ENCODE measurements at regions of chr1 and their contacts with region 1.

Region 1: DNA sequence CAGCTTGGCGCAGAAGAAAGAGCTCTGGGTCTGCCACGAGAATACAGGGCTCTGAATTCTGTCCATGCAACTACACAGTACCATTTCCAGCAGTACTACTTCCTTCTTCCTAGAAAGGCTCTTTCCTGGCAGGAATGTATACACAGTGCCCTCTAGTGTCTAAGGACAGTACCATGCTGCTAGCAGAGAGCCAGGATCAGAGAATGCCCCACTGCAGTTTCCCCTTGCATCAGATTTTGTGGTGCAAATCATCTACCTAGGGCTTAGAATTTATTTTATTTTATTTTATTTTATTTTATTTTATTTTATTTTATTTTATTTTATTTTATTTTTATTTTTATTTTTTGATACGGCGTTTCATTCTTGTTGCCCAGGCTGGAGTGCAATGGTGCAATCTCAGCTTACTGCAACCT is 50.8 kb downstream of the PAX7 start:
- DNase-seq: no peak
- H3K4me3 ChIP-seq: no peak overlapping the region
- H3K27ac ChIP-seq: no peak overlapping the region
- H3K4me1 ChIP-seq: peaks cover 3 to 8% (median 8%) of the 10 kb centered on the region in 4 experiments; a peak in 6 of 7 replicates
- H3K27me3 ChIP-seq: peaks cover 0 to 28% (median 14%) of the 10 kb centered on the region in 4 experiments; a peak in 6 of 7 replicates
- CTCF ChIP-seq: peak; percentile 31 to 89 (median 72)
- EP300 ChIP-seq: no peak
- POLR2A ChIP-seq: no peak
- RAD21 ChIP-seq: peak; percentile 83 to 91

Region 2: DNA sequence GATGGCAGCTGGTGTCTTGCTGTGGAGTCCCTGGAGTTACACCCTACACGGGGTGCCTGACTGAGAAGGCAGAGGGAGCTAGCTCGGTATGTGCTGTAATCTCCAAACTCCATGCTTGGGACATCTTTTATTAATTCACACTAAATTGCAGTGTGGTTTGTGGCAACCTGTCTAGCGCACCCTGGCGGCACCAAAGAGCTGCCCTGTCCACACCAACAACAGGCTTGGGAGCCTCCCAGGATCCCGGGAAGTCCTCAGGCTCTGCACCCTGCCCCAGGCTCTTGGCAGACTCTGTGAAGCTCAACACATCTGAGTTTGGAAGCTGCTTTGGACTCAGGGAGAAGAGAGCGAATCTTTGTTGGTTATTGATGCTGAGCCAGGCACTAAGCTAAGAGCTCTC is 434.9 kb before region 1 on chr1:
- CTCF ChIA-PET with region 1: no interaction called
- POLR2A ChIA-PET with region 1: no interaction called
- DNase-seq: no peak
- H3K4me3 ChIP-seq: no peak overlapping the region
- H3K27ac ChIP-seq: no peak overlapping the region
- H3K4me1 ChIP-seq: peaks cover 0 to 7% (median 0%) of the 10 kb centered on the region in 4 experiments; a peak in 1 of 7 replicates
- H3K27me3 ChIP-seq: no peaks in the 10 kb centered on the region
- CTCF ChIP-seq: peak; percentile 40 to 57 (median 49); a peak in 3 of 4 replicates
- EP300 ChIP-seq: no peak
- POLR2A ChIP-seq: no peak
- RAD21 ChIP-seq: peak in 1 of 2 experiments; percentile 32; a peak in 2 of 4 replicates

Region 3: GRCh38 chr1:18602533-18603211 is 78.8 kb before region 1 on chr1:
- CTCF ChIA-PET with region 1: interaction called, 123 read pairs
- POLR2A ChIA-PET with region 1: interaction called, 4 read pairs
- DNase-seq: no peak
- H3K4me3 ChIP-seq: no peak overlapping the region
- H3K27ac ChIP-seq: no peak overlapping the region
- H3K4me1 ChIP-seq: peaks cover 0 to 12% (median 4%) of the 10 kb centered on the region in 4 experiments; a peak in 5 of 7 replicates
- H3K27me3 ChIP-seq: peaks cover 0 to 5% (median 0%) of the 10 kb centered on the region in 4 experiments; a peak in 3 of 7 replicates
- CTCF ChIP-seq: no peak
- EP300 ChIP-seq: no peak
- POLR2A ChIP-seq: no peak
- RAD21 ChIP-seq: no peak

Region 4: DNA sequence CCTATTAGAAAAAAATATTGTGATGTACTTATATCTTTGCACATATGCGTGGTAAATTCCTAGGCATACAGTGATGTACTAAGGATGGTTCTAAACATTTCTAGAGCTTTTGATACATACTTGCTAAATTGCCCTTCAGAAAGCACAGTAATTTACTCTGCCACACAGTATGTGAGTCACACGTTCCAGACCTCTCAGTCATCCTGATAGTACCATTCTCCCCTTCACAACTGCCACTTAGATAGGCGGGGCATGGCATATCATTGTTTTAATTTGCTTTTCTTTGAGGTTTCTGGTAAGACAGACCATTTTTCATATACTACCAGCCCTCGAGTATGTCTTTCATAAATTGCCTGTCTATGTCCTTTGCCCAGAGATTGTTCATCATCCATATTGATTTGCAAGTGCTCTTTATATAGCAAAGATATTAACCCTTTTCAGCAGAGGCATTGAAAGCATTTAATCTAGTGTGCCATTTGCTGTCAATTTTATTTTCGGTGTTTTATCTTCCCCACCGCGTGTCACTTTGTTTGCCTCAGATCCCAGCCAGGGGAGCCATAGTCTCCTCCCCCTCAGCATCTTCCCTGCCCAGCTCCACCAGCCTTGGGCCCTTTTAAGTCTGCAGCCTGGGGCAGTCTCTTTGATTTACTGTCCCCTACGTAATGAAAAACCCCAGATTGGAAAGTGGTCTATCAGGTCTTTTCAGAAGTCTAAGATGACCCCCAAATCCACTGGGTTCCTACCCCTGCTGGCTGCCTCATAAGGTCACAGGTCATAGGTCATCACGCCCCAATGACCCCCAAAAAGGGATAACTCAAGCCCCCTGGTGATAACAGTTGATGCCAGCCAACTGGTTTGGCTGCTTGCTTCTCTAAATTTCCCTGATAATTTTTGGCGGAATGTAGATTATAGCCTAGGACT is 62.6 kb before region 1 on chr1:
- CTCF ChIA-PET with region 1: interaction called, 12 read pairs
- POLR2A ChIA-PET with region 1: no interaction called
- DNase-seq: no peak
- H3K4me3 ChIP-seq: no peak overlapping the region
- H3K27ac ChIP-seq: no peak overlapping the region
- H3K4me1 ChIP-seq: no peaks in the 10 kb centered on the region
- H3K27me3 ChIP-seq: peaks cover 0 to 5% (median 2%) of the 10 kb centered on the region in 4 experiments; a peak in 3 of 7 replicates
- CTCF ChIP-seq: no peak
- EP300 ChIP-seq: no peak
- POLR2A ChIP-seq: no peak
- RAD21 ChIP-seq: no peak

Region 5: GRCh38 chr1:18643154-18644012 is 38.0 kb before region 1 on chr1:
- CTCF ChIA-PET with region 1: interaction called, 18 read pairs
- POLR2A ChIA-PET with region 1: interaction called, 3 read pairs
- DNase-seq: peak in 1 of 2 experiments; percentile 77
- H3K4me3 ChIP-seq: peak overlapping the region; percentile 8 to 58 (median 38); a peak in 6 of 8 replicates
- H3K27ac ChIP-seq: no peak overlapping the region
- H3K4me1 ChIP-seq: peaks cover 7 to 58% (median 29%) of the 10 kb centered on the region in 4 experiments
- H3K27me3 ChIP-seq: peaks cover 73 to 96% (median 90%) of the 10 kb centered on the region in 4 experiments
- CTCF ChIP-seq: no peak
- EP300 ChIP-seq: no peak
- POLR2A ChIP-seq: no peak
- RAD21 ChIP-seq: no peak

Region 6: GRCh38 chr1:18693256-18694098 is 12.0 kb after region 1 on chr1:
- CTCF ChIA-PET with region 1: interaction called, 39 read pairs
- POLR2A ChIA-PET with region 1: interaction called, 3 read pairs
- DNase-seq: peak; percentile 49 to 89
- H3K4me3 ChIP-seq: peak overlapping the region; percentile 17 to 55 (median 26); a peak in 5 of 8 replicates
- H3K27ac ChIP-seq: no peak overlapping the region
- H3K4me1 ChIP-seq: peaks cover 0 to 10% (median 5%) of the 10 kb centered on the region in 4 experiments; a peak in 4 of 7 replicates
- H3K27me3 ChIP-seq: peaks cover 0 to 16% (median 5%) of the 10 kb centered on the region in 4 experiments; a peak in 5 of 7 replicates
- CTCF ChIP-seq: peak; percentile 21 to 28 (median 23)
- EP300 ChIP-seq: no peak
- POLR2A ChIP-seq: no peak
- RAD21 ChIP-seq: peak; percentile 20 to 53

Measured in H1 (cell line).